Panc1 (cell line): ENCODE measurements at regions of chr10 and their contacts with region 1.

Region 1: DNA sequence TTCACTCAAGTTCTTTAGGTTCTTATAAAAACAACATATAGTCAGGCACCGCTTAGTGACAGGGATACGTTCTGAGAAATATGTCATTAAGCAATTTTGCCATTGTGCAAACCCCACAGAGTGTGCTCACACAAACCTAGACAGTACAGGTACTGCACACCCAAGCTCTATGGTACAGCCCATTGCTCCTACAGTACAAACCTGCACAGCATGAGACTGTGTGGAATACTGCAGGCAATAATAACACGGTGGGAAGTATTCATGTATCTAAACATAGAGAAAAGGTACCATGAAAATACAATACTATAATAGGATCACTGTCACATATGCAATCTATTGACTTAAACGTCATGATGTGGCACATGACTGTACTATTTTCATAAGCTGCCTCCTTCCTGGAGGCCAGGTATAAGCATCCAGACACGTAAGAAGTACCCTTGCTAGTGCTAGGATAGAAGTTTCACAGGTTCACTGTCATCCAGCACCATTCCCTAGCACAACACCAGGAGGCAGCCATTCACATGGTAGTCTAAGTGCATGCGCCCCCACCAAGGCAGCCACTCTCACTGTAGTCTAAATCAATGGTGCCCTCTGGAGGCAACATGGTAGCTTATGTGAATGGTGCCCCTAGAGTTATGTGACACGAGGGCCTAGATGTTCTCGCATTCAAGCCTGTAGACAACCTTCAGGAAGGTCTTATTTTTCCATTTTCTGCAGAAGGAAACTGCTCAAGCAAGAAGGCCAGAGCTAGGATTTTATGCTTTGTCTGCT is 98.5 kb downstream of the ARHGAP22 start:
- DNase-seq: no peak
- ATAC-seq: peak; percentile 73
- H3K4me3 ChIP-seq: no peak overlapping the region
- H3K27ac ChIP-seq: no peak overlapping the region
- H3K4me1 ChIP-seq: no peaks in the 10 kb centered on the region
- H3K27me3 ChIP-seq: no peaks in the 10 kb centered on the region
- CTCF ChIP-seq: peak; percentile 57

Region 2: GRCh38 chr10:48363617-48364355 is 142.5 kb before region 1 on chr10:
- CTCF ChIA-PET with region 1: interaction called, 9 read pairs
- POLR2A ChIA-PET with region 1: no interaction called
- in situ Hi-C with region 1: no loop called
- intact Hi-C with region 1: loop called (anchors 2 kb)
- DNase-seq: peak; percentile 62
- ATAC-seq: peak; percentile 85
- H3K4me3 ChIP-seq: no peak overlapping the region
- H3K27ac ChIP-seq: no peak overlapping the region
- H3K4me1 ChIP-seq: peaks cover 15% of the 10 kb centered on the region; the same call in 1 of the 2 replicates
- H3K27me3 ChIP-seq: no peaks in the 10 kb centered on the region
- CTCF ChIP-seq: peak; percentile 80; the same call in 1 of the 2 replicates

Region 3: DNA sequence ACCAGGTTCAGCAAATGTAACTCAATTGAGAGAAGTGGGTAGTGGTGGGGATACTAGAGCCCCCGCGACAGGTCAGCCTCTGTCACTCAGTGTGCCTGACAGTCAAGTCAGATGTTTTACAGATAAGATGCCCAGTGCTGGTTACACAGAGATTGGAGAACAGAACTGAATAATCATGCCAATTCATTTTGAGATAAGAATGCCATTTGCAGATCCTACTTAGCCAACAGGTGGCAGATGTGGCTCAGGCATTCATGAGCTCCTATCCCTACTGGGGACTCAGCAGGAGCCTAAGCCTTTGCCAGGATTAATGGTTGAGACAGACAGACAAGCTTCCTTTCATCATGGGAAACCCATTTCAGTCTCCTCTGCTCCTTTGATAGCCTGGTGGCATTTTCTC is 62.1 kb before region 1 on chr10:
- CTCF ChIA-PET with region 1: no interaction called
- POLR2A ChIA-PET with region 1: no interaction called
- in situ Hi-C with region 1: no loop called
- intact Hi-C with region 1: loop called (anchors 10 kb)
- DNase-seq: no peak
- ATAC-seq: peak; percentile 57; the same call in 1 of the 2 replicates
- H3K4me3 ChIP-seq: no peak overlapping the region
- H3K27ac ChIP-seq: no peak overlapping the region
- H3K4me1 ChIP-seq: no peaks in the 10 kb centered on the region
- H3K27me3 ChIP-seq: no peaks in the 10 kb centered on the region
- CTCF ChIP-seq: no peak; the same call in 1 of the 2 replicates

Region 4: DNA sequence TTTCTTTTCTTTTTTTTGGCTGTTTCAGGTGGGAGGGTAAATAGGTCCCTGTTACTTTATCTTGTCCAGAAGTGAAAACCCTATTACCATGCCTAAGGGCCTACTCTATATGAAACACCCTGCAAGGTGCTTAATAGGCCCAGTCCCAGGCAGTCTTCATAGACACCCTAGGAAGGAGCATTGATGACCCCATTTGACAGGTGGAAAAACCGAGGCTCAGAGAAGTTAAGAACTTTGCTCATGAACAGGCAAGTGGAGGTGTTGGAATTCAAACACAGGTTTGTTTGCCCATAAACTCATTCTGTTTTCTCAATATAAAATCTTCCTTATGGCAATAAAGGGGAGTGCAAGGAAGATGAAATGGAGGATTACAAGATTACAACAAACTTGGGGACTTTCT is 17.2 kb before region 1 on chr10:
- CTCF ChIA-PET with region 1: interaction called, 15 read pairs
- POLR2A ChIA-PET with region 1: no interaction called
- in situ Hi-C with region 1: no loop called
- intact Hi-C with region 1: no loop called
- DNase-seq: no peak
- ATAC-seq: no peak
- H3K4me3 ChIP-seq: no peak overlapping the region
- H3K27ac ChIP-seq: no peak overlapping the region
- H3K4me1 ChIP-seq: no peaks in the 10 kb centered on the region
- H3K27me3 ChIP-seq: peaks cover 14% of the 10 kb centered on the region; the same call in 1 of the 2 replicates
- CTCF ChIP-seq: no peak

Region 5: DNA sequence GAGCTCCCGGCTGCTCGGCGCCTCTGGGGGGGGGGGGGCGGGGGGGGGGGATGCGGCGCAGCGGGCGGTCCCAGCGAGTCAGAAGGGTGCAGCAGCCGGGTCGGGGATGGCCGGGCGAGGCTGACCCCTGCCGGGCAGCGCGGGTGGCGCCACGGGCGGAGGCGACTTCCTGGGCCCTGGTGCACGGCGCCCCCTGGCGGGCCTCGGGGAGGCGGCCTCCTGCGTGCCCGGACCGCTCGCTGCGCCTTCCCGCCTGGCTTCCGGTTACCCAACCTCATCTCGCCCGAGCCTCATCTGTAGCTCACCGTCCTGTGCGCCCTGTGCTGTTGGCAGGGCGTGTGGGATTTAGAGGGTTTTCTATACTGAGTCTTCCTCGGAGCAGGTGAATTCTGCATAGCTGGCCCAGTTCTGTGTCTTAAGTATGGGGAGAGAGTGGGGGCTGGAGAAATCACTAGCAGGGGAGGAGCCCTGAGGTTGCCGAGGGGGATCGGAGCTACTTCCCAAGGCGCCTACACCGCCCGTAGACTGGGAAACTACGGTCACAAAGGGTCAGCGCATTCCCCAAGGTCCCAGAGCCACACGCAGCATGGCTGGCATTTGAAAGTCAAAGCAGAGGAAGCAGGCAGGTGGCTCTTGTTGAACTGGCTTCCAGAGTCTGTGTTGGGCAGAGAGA is 150.0 kb after region 1 on chr10:
- CTCF ChIA-PET with region 1: no interaction called
- POLR2A ChIA-PET with region 1: no interaction called
- in situ Hi-C with region 1: no loop called
- intact Hi-C with region 1: no loop called
- DNase-seq: peak; percentile 54
- ATAC-seq: peak; percentile 90
- H3K4me3 ChIP-seq: peak overlapping the region; percentile 43 to 67
- H3K27ac ChIP-seq: no peak overlapping the region
- H3K4me1 ChIP-seq: peaks cover 6% of the 10 kb centered on the region; the same call in 1 of the 2 replicates
- H3K27me3 ChIP-seq: peaks cover 8% of the 10 kb centered on the region
- CTCF ChIP-seq: peak; percentile 99

Region 6: DNA sequence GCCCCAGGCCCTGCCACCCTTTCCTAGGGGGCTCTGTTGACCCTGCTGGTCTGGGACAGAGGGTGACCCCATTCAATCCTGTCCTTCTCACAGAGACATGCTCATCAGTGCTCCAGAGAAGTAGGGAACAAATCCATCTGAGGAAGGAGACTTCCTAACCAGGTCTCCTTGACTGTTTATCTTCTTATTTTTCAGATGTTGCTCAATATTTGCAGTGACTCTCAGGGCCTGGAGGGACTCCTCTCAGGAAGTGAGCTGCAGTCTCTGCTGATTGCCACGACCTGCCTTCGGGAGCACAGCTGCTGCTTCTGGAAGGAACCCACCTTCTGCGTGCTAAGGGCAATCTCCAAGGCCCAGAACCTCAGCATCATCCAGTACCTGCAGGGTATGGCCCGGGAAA is 219.4 kb after region 1 on chr10:
- CTCF ChIA-PET with region 1: no interaction called
- POLR2A ChIA-PET with region 1: no interaction called
- in situ Hi-C with region 1: no loop called
- intact Hi-C with region 1: no loop called
- DNase-seq: no peak
- ATAC-seq: no peak
- H3K4me3 ChIP-seq: no peak overlapping the region
- H3K27ac ChIP-seq: no peak overlapping the region
- H3K4me1 ChIP-seq: no peaks in the 10 kb centered on the region
- H3K27me3 ChIP-seq: peaks cover 10% of the 10 kb centered on the region; the same call in 1 of the 2 replicates
- CTCF ChIP-seq: no peak